BJ (cell line): ENCODE measurements at regions of chr10 and their contacts with region 1.

Region 1: DNA sequence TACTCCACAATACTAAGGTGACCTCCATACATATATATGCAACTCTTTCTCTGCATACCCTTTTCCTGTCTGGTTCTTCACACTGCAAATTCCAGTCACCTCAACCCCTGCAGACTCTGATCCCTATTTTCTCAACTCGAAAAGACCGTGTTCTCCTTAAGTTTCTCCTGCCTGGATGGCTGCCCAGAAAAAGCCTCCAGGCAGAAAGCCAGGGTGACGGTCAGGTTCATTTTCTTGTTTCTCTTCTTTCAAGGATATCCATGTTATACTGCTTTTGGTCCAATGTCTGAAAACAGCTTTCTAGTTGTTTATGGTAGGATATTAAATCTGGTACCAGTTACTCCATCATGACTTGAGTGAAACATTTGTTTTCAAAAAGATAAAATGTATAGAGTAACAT is 267.8 kb upstream of the MYO3A start:
- DNase-seq: no peak
- H3K4me3 ChIP-seq: no peak overlapping the region
- H3K27me3 ChIP-seq: no peaks in the 10 kb centered on the region
- CTCF ChIP-seq: no peak

Region 2: DNA sequence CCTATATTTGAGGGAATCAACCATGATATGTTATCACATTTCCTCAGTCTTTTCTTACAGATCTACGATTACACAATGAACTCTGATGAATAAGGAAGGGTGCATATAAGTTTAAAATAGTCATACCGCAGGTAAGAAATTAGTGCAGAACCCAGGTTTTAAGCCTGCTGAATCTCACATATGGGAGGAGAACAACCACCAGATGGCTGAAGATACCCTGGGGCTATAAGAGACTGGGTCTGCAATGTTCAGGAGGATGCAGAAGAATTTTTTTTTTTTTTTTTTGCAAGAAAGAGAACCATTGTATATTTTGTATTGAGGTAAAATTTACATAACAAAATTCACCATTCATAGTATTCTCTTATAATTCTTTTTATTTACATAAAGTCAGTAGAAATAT is 104.5 kb before region 1 on chr10:
- CTCF ChIA-PET with region 1: no interaction called
- POLR2A ChIA-PET with region 1: no interaction called
- DNase-seq: no peak
- H3K4me3 ChIP-seq: no peak overlapping the region
- H3K27me3 ChIP-seq: no peaks in the 10 kb centered on the region
- CTCF ChIP-seq: no peak

Region 3: GRCh38 chr10:25707976-25708671 is 41.8 kb after region 1 on chr10:
- CTCF ChIA-PET with region 1: no interaction called
- POLR2A ChIA-PET with region 1: no interaction called
- DNase-seq: no peak
- H3K4me3 ChIP-seq: no peak overlapping the region
- H3K27me3 ChIP-seq: no peaks in the 10 kb centered on the region
- CTCF ChIP-seq: no peak

Region 4: DNA sequence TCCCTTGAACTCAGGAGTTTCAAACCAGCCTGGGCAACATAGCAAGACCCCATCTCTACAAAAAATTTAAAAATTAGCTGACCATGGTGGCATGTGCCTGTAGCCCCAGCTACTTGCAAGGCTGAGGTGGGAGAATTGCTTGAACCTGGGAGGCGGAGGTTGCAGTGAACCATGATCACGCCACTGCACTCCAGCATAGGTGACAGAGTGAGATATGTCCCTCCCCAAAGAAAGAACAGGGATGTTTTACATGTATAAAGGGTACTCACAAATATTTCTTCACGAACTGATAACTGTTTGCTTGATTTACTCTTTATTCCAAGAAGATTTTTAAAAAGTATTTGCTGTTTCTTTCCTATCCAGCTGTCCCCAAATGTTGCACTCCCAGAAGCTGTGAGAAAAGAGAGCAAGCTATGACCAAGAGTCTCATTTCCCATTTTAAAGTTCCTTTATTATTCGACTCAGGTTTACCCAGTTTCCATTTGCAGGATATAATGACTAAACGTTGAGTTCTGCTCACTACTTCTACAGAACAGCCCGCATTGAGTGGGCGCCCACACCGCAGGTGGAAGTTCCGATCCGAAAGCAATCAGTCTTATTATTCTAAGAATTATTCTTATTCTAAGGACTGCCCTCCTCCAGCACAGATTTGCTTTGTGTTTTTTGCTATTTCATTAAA is 862.6 kb after region 1 on chr10:
- CTCF ChIA-PET with region 1: no interaction called
- POLR2A ChIA-PET with region 1: interaction called, 18 read pairs
- DNase-seq: no peak
- H3K4me3 ChIP-seq: no peak overlapping the region
- H3K27me3 ChIP-seq: no peaks in the 10 kb centered on the region
- CTCF ChIP-seq: no peak